Cardiac septum (tissue), 1 donor: ENCODE measurements at regions of chr9 and their contacts with region 1.

Region 1: GRCh38 chr9:116572095-116572748 is 114.9 kb upstream of the TRIM32 start:
- DNase-seq: peak; percentile 93

Region 2: DNA sequence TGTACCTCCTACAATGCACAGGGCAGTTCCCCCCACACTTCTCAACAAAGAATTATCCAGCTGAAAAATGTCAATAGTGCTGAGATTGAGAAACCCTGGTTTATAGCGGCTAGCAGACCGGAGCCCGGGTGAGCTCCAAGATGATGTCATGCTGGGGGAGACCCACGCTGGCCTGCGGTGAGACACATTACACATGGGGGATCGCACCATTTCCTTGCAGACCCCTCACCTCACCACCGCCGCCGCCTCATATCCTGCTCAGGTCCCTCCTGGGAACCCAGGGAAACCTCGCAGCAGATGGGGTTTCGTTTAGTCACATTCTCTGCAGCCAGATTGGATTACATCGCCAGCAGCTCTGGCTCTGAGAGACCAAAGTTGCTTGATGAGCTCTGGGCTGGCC is 1439.6 kb before region 1 on chr9:
- intact Hi-C with region 1: no loop called
- DNase-seq: no peak

Region 3: GRCh38 chr9:115952430-115953316 is 619.5 kb before region 1 on chr9:
- intact Hi-C with region 1: loop called (anchors 10 kb)
- DNase-seq: no peak

Region 4: GRCh38 chr9:116365056-116365471 is 207.2 kb before region 1 on chr9:
- intact Hi-C with region 1: loop called (anchors 5 kb)
- DNase-seq: peak; percentile 83

Region 5: DNA sequence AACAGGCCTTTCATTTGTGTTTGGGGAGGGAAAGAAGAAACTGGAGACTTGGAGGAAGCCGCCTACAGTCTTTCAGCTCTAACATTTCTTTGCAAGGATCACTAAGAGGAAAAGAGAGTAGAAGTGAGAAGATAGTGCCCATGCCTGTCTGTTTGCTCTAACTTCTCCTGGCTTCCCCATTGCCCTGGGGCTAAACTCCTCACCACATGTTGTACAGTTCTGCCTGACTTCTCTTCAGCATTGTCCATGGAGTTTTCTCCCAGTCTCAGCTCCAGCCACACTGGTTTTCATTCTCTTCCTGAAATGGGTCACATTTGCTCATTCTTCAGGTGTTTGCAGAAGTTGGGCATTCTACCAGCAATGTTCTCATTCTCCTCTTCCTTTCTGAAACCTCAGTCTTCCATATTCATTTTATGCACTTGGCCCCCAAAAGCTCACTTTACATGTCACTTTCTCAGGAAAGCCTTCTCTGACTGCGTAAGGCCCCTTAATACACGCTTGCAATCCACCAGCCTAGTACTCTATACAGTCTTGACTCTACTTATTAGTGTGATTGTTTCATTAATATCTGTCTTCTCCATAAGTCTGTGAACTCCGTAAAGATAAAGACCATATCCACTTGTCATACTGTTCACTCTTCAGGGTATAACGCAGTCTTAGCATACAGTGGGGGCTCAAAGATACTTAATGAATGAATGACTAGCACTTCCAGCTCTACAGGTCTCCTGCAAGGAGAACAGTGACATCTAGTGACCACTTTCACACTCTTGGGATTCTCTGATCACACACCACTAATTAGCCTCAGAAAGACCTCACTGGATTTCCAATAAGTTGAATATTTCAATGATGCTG is 74.7 kb after region 1 on chr9:
- intact Hi-C with region 1: loop called (anchors 5 kb)
- DNase-seq: no peak

Region 6: DNA sequence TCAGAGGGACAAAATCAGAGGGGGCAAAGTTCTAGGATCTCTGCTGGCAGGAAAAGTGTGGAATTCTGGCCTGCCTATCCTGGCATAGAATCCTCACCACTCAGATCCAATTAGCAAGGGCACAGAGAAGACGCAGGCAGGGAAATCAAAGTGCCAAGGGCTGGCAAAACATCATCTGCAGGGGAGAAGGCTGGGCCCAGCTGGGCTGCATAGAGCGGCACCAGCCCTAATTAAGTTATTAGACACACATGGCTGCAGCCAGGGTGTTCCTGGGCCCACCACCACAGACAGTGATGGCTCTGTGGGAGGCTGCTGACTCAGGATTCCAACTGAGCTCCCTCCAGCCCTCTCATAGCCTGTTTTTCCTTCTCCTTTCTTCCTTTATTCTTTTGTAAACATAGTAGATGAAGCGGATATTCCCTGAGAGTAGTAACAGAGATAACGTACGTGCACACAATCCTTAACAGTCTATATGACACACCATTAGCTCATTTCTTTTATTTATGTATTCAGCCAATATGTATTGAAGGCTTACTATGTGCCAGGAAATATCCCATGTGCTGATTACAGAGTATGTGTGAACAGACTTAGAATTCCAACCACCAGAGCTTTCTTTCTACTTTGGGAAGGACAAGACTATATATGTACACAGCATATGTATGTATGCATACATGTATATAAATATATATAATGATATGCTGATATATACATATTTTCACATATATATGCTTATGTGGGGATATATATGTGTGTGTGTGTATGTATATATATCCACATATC is 606.6 kb after region 1 on chr9:
- intact Hi-C with region 1: no loop called
- DNase-seq: no peak